Endothelial cell of umbilical vein (primary cell): ENCODE measurements at regions of chr20 and their contacts with region 1.

Region 1: DNA sequence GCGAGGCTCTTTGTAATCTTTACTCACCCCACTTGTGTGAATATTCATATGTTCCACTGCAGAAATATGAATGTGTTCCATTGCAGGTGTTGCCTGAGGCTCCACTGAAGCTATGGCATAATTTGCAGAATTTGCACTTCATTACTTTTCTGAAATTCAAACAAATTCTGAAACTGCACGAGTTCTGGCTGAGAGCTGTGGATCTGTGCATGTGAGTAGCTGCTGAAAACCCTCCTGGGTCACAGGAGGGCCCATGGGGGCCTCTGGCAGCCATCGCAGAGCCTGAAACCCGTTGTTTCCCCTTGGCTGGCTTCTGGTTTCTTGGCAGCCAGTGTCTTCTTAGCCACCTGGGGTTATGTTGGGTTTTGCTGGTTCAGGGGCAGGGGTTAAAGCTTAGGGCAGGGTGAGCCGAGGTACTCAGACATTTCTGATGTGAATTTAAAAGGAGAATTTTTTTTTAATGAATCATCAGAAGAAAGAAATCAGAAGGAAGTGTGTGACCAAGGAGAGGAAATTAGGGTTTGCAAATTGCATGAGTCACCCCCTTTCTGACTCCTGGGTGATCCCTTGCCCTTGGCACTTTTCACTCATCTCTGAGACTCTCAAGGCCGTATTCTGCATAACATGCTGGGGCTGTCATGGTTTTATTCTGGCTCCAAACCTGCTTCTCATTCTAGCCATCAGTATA is 40.6 kb downstream of the TOX2 start:
- DNase-seq: peak; percentile 92
- H3K4me3 ChIP-seq: no peak overlapping the region
- H3K27ac ChIP-seq: peak overlapping the region; percentile 80
- H3K4me1 ChIP-seq: peaks cover 47% of the 10 kb centered on the region
- H3K27me3 ChIP-seq: no peaks in the 10 kb centered on the region
- CTCF ChIP-seq: no peak
- POLR2A ChIP-seq: peak; percentile 41

Region 2: DNA sequence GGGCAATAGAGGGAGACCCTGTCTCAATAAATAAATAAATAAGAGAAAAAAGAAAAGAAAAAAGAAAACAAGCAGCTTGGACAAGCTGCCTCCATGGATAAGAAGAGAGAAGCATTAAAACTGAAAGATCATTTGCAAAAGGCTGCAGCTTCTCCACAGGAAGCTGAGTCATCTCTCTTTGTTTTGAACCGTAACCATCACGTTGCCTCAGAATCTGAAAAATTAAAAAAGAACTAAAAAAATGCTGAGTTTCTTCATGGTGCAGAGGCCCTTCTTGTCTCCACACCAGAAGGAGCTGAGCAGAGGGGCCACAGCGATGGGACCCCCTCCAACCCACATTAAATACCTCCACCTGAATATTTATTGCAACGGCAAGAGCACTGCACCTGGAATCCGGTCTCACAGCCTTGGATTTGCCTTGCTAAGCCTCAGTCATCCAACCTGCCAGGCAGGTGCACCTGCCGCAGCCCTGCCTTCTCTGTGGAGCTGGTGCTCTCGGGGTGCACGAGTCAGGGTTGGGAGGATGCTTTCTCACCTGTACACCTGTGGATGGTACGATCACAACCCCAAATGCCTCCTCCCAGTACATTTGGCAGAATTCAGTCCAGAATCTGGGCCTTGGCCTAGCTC is 12.4 kb before region 1 on chr20:
- CTCF ChIA-PET with region 1: interaction called, 31 read pairs
- POLR2A ChIA-PET with region 1: interaction called, 3 read pairs
- dilution Hi-C with region 1: no loop called
- intact Hi-C with region 1: loop called (anchors 1 kb)
- DNase-seq: peak; percentile 78
- H3K4me3 ChIP-seq: no peak overlapping the region
- H3K27ac ChIP-seq: peak overlapping the region; percentile 75
- H3K4me1 ChIP-seq: peaks cover 46% of the 10 kb centered on the region
- H3K27me3 ChIP-seq: no peaks in the 10 kb centered on the region
- CTCF ChIP-seq: no peak
- POLR2A ChIP-seq: no peak

Region 3: GRCh38 chr20:43983359-43983758 is 28.2 kb after region 1 on chr20:
- CTCF ChIA-PET with region 1: interaction called, 10 read pairs
- POLR2A ChIA-PET with region 1: no interaction called
- dilution Hi-C with region 1: no loop called
- intact Hi-C with region 1: loop called (anchors 1 kb)
- DNase-seq: no peak
- H3K4me3 ChIP-seq: no peak overlapping the region
- H3K27ac ChIP-seq: peak overlapping the region; percentile 71
- H3K4me1 ChIP-seq: peaks cover 23% of the 10 kb centered on the region
- H3K27me3 ChIP-seq: no peaks in the 10 kb centered on the region
- CTCF ChIP-seq: peak; percentile 22 to 33
- POLR2A ChIP-seq: no peak

Region 4: GRCh38 chr20:44018259-44018941 is 63.2 kb after region 1 on chr20:
- CTCF ChIA-PET with region 1: interaction called, 15 read pairs
- POLR2A ChIA-PET with region 1: no interaction called
- dilution Hi-C with region 1: no loop called
- intact Hi-C with region 1: loop called (anchors 1 kb)
- DNase-seq: peak; percentile 84
- H3K4me3 ChIP-seq: no peak overlapping the region
- H3K27ac ChIP-seq: no peak overlapping the region
- H3K4me1 ChIP-seq: peaks cover 39% of the 10 kb centered on the region
- H3K27me3 ChIP-seq: no peaks in the 10 kb centered on the region
- CTCF ChIP-seq: no peak
- POLR2A ChIP-seq: no peak

Region 5: DNA sequence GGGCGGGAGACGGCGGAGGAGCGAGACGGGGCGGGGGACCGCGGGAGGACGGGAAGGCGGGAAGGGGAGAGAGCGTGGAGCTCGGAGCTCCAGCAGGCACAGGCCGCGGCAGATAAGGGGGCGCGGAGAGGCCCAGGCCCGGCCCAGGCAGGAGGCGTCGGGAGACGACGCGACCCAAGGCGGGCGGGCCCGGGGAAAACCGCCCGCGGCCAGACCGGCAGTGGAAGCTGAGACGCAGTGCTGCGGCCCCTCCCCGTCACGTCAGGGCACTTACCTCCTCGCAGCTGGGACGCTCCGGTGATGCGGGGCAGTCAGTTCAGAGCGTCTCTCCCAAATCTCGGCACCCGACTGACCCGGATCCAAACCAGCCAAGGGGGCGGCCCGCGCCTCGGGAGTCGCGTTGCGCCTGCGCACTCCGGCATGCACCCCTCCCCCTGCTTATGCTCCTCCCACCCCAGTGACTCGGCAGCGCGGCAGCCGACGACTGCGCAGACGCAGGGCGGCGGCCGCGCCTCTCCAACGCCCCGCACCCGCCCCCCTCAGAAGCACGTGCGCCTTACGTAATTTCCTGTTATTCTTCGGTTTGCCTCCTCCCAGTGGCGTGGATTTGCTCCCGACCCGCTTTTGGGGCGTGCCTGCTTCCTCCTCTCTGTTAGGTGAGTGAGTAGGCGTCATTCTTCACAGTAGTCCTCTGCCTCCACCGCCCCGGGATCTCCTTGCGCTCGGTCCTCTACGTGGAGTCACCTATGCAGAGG is 255.4 kb after region 1 on chr20 and contains the start of gene OSER1:
- CTCF ChIA-PET with region 1: no interaction called
- POLR2A ChIA-PET with region 1: no interaction called
- dilution Hi-C with region 1: no loop called
- intact Hi-C with region 1: loop called (anchors 10 kb)
- DNase-seq: peak; percentile 98
- H3K4me3 ChIP-seq: peak within 1 kb of the TSS; percentile 61 to 84 (median 79)
- H3K27ac ChIP-seq: peak within 1 kb of the TSS; percentile 87
- H3K4me1 ChIP-seq: peaks cover 27% of the 10 kb centered on the region
- H3K27me3 ChIP-seq: no peaks in the 10 kb centered on the region
- CTCF ChIP-seq: no peak
- POLR2A ChIP-seq: peak; percentile 88
- total RNA-seq, gene OSER1: 28.8 and 30.8 TPM in 2 replicates

Region 6: DNA sequence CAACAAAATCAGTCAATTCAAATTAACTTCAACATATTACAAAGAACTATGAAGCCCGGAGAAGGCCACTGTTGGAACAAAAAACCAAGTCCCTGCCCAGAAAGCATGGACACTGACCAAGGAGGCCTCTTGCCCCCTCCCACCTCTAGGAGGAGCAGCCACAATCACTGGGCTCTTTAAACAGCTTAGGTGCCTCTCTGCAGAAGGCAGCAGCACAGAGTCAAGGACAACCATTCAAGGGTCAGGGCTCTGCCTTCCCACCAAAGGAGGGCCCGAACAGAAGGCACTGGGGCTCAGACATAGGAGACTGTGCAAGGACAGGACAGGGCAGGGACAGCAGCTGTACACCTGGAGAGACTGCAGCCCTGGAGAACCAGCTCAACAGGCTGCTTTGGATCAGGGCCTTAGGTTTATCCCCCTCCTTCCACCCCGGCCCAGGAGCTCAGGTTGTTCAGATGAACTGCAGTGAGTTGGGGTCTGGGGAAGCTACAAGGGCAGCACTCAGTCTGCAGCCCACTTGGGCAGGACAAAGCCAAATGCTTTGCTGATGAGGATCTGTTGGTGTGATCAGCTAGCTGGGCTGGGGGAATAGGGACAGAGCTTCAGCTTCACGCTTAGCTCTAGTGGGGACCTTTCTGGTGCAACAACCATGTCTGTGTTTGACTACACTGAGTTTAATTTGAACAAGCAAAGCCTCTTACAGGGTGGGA is 987.2 kb after region 1 on chr20:
- CTCF ChIA-PET with region 1: no interaction called
- POLR2A ChIA-PET with region 1: no interaction called
- dilution Hi-C with region 1: no loop called
- intact Hi-C with region 1: no loop called
- DNase-seq: no peak
- H3K4me3 ChIP-seq: no peak overlapping the region
- H3K27ac ChIP-seq: no peak overlapping the region
- H3K4me1 ChIP-seq: peaks cover 12% of the 10 kb centered on the region
- H3K27me3 ChIP-seq: no peaks in the 10 kb centered on the region
- CTCF ChIP-seq: no peak
- POLR2A ChIP-seq: no peak